ENCODE measurements at regions of chr20 and their contacts with region 1.

Region 1: GRCh38 chr20:324177-325044 is 941 bp upstream of the SOX12 start:
- DNase-seq: peak; percentile 91
- H3K4me3 ChIP-seq: peak overlapping the region; percentile 93 to 96
- H3K27ac ChIP-seq: peak overlapping the region; percentile 95 to 97
- H3K4me1 ChIP-seq: peaks cover 19 to 20% of the 10 kb centered on the region in 2 experiments; a peak in 2 of 4 replicates
- H3K27me3 ChIP-seq: no peaks in the 10 kb centered on the region
- CTCF ChIP-seq: peak; percentile 46
- EP300 ChIP-seq: 0 out of 4 replicates have a peak, but pooled peaks of 1 of the 2 experiments have one; percentile 17
- RAD21 ChIP-seq: no peak; the same call in 1 of the 2 replicates

Region 2: DNA sequence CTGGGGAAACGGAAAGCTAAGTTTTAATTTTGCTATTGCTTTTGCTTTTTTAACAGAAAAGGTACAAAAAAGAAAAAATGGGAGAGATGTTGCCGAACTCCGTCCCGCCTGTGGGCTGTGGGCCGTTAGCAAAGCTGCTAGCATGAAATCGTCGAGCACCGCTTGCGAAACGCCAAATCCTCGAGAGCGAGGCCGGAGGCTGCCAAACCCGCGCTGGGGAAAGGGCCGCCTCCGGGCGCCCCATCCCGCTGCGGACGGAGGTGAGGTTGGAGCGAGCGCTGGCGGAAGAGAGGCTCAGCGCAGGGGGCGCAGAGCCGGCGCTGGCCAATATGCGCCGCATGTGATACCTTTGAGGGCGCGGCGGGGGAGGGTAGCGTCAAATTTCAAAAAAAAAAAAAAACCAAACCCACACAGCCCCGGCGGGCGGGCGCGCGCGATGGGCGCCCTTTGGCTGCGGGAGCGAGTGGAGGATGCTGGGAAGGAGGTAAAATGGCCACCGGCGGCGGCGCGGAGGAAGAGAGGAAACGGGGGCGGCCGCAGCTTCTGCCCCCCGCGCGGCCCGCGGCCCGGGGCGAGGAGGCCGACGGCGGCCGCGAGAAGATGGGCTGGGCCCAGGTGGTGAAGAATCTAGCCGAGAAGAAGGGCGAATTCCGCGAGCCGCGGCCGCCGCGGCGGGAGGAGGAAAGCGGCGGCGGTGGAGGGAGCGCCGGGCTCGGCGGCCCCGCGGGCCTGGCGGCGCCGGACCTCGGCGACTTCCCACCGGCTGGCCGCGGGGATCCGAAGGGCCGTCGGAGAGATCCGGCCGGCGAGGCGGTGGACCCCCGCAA is 27.1 kb before region 1 on chr20 and contains the start of gene ZCCHC3:
- CTCF ChIA-PET with region 1: interaction called, 5 read pairs
- POLR2A ChIA-PET with region 1: interaction called, 29 read pairs
- DNase-seq: peak; percentile 96
- H3K4me3 ChIP-seq: peak within 1 kb of the TSS; percentile 87 to 93
- H3K27ac ChIP-seq: peak within 1 kb of the TSS; percentile 86 to 95
- H3K4me1 ChIP-seq: peaks cover 20 to 24% of the 10 kb centered on the region in 2 experiments
- H3K27me3 ChIP-seq: no peaks in the 10 kb centered on the region
- CTCF ChIP-seq: peak; percentile 21; the same call in 1 of the 2 replicates
- EP300 ChIP-seq: peak in 1 of 2 experiments; percentile 26; a peak in 1 of 4 replicates
- RAD21 ChIP-seq: peak; percentile 31
- polyA plus RNA-seq, gene ZCCHC3: 9.0 and 9.5 TPM in 2 replicates

Region 3: DNA sequence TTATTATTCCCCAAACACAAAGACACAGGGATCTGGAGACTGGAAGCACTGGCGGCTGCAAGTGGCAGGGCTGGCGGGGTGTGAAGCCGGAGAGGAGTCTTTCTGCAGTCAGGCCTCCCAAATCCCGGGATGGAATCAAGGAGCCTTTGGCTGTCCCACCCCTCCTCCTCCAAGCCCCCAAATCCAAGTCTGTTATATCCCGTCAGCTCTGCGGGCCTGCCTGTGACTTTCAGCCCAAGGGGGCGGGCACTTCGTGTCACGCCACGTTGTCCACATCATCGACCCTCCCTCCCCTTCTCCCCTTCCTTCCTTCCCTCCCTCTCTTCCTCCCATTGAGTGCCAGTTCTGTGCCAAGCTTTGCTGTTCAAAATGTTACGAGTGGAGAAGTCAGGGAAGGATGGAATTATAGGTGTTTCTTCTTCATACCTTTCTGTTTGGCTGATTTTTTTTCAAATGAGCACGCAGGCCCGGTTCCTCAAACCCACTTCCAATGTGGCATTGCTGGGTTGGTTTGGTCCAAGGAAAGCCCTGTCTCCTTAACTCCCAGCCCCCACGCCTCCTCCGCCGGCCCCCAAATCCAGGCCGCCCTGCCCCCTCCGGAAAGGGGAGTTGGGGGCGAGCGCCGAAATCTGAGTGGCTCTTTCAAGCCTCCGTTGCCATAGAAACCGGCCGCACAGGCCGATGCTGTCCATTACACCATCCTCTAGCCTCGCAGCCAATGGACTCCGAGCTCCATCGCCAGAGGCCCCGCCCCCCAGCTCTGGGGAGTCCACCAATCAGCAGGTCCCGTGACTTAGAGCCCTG is 14.4 kb before region 1 on chr20:
- CTCF ChIA-PET with region 1: interaction called, 21 read pairs
- POLR2A ChIA-PET with region 1: interaction called, 23 read pairs
- DNase-seq: peak; percentile 97
- H3K4me3 ChIP-seq: peak overlapping the region; percentile 53 to 69
- H3K27ac ChIP-seq: peak overlapping the region; percentile 97 to 99
- H3K4me1 ChIP-seq: peaks cover 15 to 26% of the 10 kb centered on the region in 2 experiments; a peak in 2 of 4 replicates
- H3K27me3 ChIP-seq: no peaks in the 10 kb centered on the region
- CTCF ChIP-seq: no peak
- EP300 ChIP-seq: no peak
- RAD21 ChIP-seq: no peak

Region 4: DNA sequence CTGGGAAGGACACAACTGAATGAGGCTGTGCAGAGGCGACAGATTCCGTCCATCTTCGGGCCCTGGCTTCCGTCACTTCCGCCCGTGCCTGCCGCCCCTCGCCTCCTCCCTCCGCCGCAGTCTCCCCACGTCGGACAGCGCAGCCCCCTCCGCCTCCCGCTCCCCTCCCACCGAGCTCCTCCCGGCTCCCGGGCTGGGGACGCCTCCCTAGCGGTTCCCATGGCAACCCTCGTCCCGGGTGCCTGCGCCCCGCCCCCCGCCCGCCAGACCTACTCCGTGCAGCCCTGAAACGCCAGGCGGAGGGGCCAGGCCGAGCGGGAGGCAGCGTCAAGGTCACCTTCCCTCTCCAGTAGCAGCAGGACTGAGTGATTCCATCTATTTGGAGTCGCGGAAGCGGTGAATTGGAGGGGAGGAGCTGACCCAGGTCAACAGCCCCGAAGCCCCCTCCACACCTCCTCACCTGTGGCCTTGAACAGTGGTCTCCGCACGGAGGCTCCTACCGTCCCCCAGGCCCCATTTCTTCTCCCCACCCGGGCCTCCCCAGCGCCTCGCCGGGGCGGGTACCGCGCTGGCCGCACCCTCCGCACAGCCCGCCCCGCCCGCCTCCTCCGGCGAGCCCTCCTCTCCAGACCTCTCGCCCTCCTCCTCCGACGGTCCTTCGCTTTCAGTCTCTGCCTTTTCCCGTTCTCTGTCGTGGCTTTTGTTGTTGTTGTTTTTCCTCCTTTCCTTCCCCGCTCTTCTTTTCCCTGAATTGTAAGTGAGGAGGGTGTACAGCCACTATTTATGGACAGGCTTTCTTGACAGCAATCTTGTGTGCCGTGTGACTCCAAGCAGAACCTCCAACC is 23.5 kb after region 1 on chr20:
- CTCF ChIA-PET with region 1: interaction called, 65 read pairs
- POLR2A ChIA-PET with region 1: interaction called, 39 read pairs
- DNase-seq: peak; percentile 100
- H3K4me3 ChIP-seq: peak overlapping the region; percentile 62 to 88
- H3K27ac ChIP-seq: peak overlapping the region; percentile 97 to 98
- H3K4me1 ChIP-seq: peaks cover 0 to 16% of the 10 kb centered on the region in 2 experiments; a peak in 2 of 4 replicates
- H3K27me3 ChIP-seq: no peaks in the 10 kb centered on the region
- CTCF ChIP-seq: no peak
- EP300 ChIP-seq: no peak; a peak in 1 of 4 replicates
- RAD21 ChIP-seq: no peak

Region 5: DNA sequence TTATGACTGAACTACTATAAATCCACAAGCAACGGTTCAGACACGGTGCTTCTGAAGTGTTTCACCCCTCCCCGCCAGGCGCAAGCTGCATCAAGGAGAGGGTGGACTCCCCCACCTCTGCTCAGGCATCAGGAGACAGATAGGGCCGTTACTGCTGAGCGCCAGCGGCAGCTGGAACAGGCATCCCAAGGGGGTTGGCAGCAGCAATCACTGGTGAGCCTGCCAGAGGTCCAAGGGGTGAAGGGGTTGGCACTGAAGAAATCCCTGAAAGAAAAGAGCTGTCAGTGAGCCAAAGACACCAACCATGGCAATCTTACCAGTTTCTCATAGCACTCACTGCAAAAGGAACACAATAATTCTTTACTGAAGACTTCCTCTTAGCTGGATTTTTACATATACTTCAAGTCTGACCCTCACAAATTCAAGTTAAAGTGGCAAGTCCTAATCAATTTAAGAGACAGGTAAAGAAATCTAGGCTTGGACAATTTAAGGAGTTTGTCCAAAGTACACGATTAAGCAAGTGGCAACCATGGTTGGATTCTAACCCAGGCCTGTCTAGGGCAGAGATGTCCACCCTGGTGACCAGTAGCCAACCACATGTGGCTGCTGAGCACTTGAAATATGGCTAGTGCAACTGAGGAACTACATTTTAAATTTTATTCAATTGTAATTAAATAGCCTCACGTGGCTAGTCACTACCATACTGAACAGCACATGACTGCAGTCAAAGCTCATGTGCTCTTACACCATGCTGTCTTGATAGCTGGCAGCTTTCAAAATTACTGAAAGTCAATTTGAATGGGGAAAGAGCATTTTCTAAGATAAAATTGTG is 159.6 kb after region 1 on chr20:
- CTCF ChIA-PET with region 1: no interaction called
- POLR2A ChIA-PET with region 1: no interaction called
- DNase-seq: no peak
- H3K4me3 ChIP-seq: no peak overlapping the region
- H3K27ac ChIP-seq: no peak overlapping the region
- H3K4me1 ChIP-seq: no peaks in the 10 kb centered on the region; a peak in 1 of 4 replicates
- H3K27me3 ChIP-seq: no peaks in the 10 kb centered on the region
- CTCF ChIP-seq: no peak
- EP300 ChIP-seq: no peak
- RAD21 ChIP-seq: no peak

Region 6: DNA sequence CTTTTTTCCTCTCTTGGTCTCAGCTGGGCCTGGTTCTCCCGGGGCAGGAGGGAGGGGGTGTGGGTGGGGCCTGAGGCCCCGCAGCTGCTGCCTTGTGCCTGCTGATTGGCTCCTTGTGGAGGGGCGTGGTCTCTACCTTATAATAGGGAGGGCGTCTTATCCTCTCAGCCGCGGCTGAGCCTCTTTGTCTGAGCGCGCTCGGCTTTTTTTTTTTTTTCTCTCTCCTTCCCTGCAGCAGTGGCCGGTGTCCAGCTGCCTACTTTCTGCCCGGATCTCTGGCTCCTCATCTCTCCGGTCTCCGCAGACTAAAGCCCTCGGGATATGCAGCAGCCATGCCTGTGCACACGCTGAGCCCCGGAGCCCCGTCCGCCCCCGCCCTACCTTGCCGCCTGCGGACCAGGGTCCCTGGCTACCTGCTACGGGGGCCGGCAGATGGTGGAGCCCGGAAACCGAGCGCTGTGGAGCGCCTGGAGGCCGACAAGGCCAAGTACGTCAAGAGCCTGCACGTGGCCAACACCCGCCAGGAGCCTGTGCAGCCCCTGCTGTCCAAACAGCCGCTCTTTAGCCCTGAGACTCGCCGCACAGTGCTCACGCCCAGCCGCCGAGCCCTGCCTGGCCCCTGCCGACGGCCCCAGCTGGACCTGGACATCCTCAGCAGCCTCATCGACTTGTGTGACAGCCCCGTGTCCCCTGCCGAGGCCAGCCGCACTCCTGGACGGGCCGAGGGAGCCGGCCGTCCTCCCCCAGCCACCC is 520.2 kb after region 1 on chr20:
- CTCF ChIA-PET with region 1: no interaction called
- POLR2A ChIA-PET with region 1: no interaction called
- DNase-seq: peak; percentile 99
- H3K4me3 ChIP-seq: peak overlapping the region; percentile 50 to 65
- H3K27ac ChIP-seq: peak overlapping the region; percentile 38 to 89; a peak in 2 of 4 replicates
- H3K4me1 ChIP-seq: peaks cover 0 to 50% of the 10 kb centered on the region in 2 experiments; a peak in 1 of 4 replicates
- H3K27me3 ChIP-seq: no peaks in the 10 kb centered on the region
- CTCF ChIP-seq: no peak
- EP300 ChIP-seq: peak in 1 of 2 experiments; percentile 14; a peak in 1 of 4 replicates
- RAD21 ChIP-seq: no peak